ENCODE measurements at regions of chr1 and their contacts with region 1.

Region 1: GRCh38 chr1:151098126-151098525 is 27.6 kb downstream of the GABPB2 start:
- DNase-seq: no peak
- H3K4me3 ChIP-seq: no peak overlapping the region
- H3K4me3 Mint-ChIP-seq: no peak overlapping the region
- H3K27ac ChIP-seq: no peak overlapping the region
- H3K27ac Mint-ChIP-seq: no peak overlapping the region
- H3K4me1 ChIP-seq: no peaks in the 10 kb centered on the region
- H3K4me1 Mint-ChIP-seq: no peaks in the 10 kb centered on the region
- H3K27me3 ChIP-seq: no peaks in the 10 kb centered on the region
- H3K27me3 Mint-ChIP-seq: no peaks in the 10 kb centered on the region

Region 2: GRCh38 chr1:151008190-151008860 is 89.8 kb before region 1 on chr1 and contains the start of gene PRUNE1:
- CTCF ChIA-PET with region 1: interaction called, 12 read pairs
- POLR2A ChIA-PET with region 1: no interaction called
- intact Hi-C with region 1: no loop called
- DNase-seq: peak; percentile 92 to 99 (median 96)
- H3K4me3 ChIP-seq: peak within 1 kb of the TSS; percentile 74 to 92
- H3K4me3 Mint-ChIP-seq: peak within 1 kb of the TSS; percentile 88 to 99 (median 95)
- H3K27ac ChIP-seq: peak within 1 kb of the TSS; percentile 88
- H3K27ac Mint-ChIP-seq: peak within 1 kb of the TSS; percentile 90 to 100 (median 99)
- H3K4me1 ChIP-seq: peaks cover 67% of the 10 kb centered on the region
- H3K4me1 Mint-ChIP-seq: peaks cover 47 to 93% (median 69%) of the 10 kb centered on the region in 4 donors
- H3K27me3 ChIP-seq: no peaks in the 10 kb centered on the region
- H3K27me3 Mint-ChIP-seq: no peaks in the 10 kb centered on the region
- total RNA-seq, gene PRUNE1: 35.0 to 38.9 TPM

Region 3: GRCh38 chr1:151047925-151048645 is 50.0 kb before region 1 on chr1:
- CTCF ChIA-PET with region 1: interaction called, 11 read pairs
- POLR2A ChIA-PET with region 1: interaction called, 3 read pairs
- intact Hi-C with region 1: no loop called
- DNase-seq: peak; percentile 59 to 72 (median 64)
- H3K4me3 ChIP-seq: peak overlapping the region; percentile 59 to 74
- H3K4me3 Mint-ChIP-seq: peak overlapping the region; percentile 86 to 95 (median 90)
- H3K27ac ChIP-seq: peak overlapping the region; percentile 74
- H3K27ac Mint-ChIP-seq: peak overlapping the region; percentile 88 to 98 (median 93)
- H3K4me1 ChIP-seq: peaks cover 38% of the 10 kb centered on the region
- H3K4me1 Mint-ChIP-seq: peaks cover 35 to 81% (median 61%) of the 10 kb centered on the region in 4 donors
- H3K27me3 ChIP-seq: no peaks in the 10 kb centered on the region
- H3K27me3 Mint-ChIP-seq: no peaks in the 10 kb centered on the region

Region 4: DNA sequence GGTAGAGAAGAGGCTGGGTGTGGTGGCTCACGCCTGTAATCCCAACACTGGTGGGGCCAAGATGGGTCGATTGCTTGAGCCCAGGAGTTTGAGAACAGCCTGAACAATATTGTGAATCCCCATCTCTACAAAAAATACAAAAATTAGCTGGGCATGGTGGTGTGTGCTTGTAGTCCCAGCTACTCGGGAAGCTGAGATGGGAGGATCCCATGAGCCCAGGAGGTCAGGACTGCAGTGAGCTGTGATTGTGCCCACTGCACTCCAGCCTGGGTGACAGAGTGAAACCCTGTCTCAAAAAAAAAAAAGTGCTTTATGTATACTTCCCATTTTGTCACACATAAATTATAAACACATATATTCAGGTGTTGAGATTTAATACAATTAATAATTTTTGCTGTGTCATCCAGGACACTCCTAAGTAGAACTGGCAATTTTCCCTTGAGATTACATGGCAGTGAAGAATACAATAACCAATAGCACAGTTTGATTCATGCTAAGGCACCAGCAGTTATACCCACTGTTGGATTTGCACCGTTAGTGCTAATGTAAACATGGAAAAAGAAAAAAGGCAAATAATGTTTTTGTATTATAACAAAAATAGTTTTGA is 12.1 kb before region 1 on chr1:
- CTCF ChIA-PET with region 1: interaction called, 15 read pairs
- POLR2A ChIA-PET with region 1: no interaction called
- intact Hi-C with region 1: no loop called
- DNase-seq: no peak
- H3K4me3 ChIP-seq: no peak overlapping the region
- H3K4me3 Mint-ChIP-seq: no peak overlapping the region
- H3K27ac ChIP-seq: no peak overlapping the region
- H3K27ac Mint-ChIP-seq: peak overlapping the region in 2 of 7 donors; percentile 16 to 65
- H3K4me1 ChIP-seq: no peaks in the 10 kb centered on the region
- H3K4me1 Mint-ChIP-seq: no peaks in the 10 kb centered on the region
- H3K27me3 ChIP-seq: no peaks in the 10 kb centered on the region
- H3K27me3 Mint-ChIP-seq: no peaks in the 10 kb centered on the region

Region 5: DNA sequence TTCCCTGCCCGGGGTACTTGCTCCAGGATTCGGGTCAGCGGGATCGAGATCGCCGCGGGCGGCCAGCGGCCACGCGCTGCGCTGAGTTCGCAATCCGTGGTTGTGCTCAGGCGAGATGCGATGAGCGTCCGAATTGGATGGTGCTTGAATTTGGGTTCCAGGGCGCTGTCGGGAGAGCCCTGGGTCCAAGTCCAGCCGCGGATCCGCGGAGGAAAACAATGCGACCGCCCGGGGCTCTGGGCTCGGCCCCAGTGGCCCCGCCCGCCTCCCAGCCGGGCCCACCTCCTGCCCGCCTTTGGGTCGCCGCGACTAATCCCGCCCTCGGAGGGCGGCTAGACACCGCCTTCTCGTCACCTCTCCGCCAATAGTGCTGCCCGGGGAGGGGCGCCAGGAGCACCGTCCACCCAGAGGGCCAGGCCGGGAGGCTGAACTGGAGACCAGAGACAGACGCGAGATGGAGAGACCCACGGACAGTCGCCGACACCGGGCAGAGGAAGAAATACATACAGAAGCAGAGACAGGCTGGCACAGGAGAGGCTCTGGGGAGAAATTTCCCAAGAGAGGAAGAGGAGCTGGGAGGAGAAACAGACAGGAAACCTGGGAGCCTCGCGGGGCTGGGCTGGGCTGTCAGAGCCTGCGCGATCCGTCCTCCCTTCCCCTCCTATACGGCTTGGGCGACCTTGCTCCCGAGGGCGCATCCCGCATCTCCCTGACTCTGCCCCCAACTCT is 48.5 kb after region 1 on chr1 and contains the start of gene SEMA6C:
- CTCF ChIA-PET with region 1: interaction called, 18 read pairs
- POLR2A ChIA-PET with region 1: interaction called, 7 read pairs
- intact Hi-C with region 1: no loop called
- DNase-seq: peak; percentile 80 to 88 (median 81)
- H3K4me3 ChIP-seq: peak within 1 kb of the TSS; percentile 83
- H3K4me3 Mint-ChIP-seq: peak within 1 kb of the TSS; percentile 92 to 98 (median 97)
- H3K27ac ChIP-seq: peak within 1 kb of the TSS; percentile 56
- H3K27ac Mint-ChIP-seq: peak within 1 kb of the TSS; percentile 37 to 96 (median 94)
- H3K4me1 ChIP-seq: peaks cover 24% of the 10 kb centered on the region
- H3K4me1 Mint-ChIP-seq: peaks cover 9 to 33% (median 17%) of the 10 kb centered on the region in 4 donors
- H3K27me3 ChIP-seq: no peaks in the 10 kb centered on the region
- H3K27me3 Mint-ChIP-seq: peaks cover 0 to 2% of the 10 kb centered on the region in 2 donors
- total RNA-seq, gene SEMA6C: 7.6 to 8.2 TPM

Region 6: DNA sequence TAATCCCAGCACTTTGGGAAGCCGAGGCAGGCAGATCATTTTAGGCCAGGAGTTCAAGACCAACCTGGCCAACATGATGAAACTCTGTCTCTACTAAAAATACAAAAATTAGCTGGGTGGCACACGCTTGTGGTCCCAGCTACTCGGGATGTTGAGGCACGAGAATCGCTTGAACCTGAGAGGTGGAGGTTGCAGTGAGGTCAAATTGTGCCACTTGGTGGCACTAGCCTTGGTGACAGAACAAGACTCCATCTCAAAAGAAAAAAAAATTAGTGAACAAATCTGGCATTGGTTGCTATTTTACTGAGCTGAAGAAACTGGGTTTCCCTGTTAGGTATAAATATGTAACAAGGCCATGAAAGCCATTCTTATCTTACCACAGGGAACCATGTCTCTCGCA is 129.5 kb after region 1 on chr1:
- CTCF ChIA-PET with region 1: interaction called, 11 read pairs
- POLR2A ChIA-PET with region 1: no interaction called
- intact Hi-C with region 1: no loop called
- DNase-seq: no peak
- H3K4me3 ChIP-seq: no peak overlapping the region
- H3K4me3 Mint-ChIP-seq: no peak overlapping the region
- H3K27ac ChIP-seq: no peak overlapping the region
- H3K27ac Mint-ChIP-seq: no peak overlapping the region
- H3K4me1 ChIP-seq: no peaks in the 10 kb centered on the region
- H3K4me1 Mint-ChIP-seq: no peaks in the 10 kb centered on the region
- H3K27me3 ChIP-seq: no peaks in the 10 kb centered on the region
- H3K27me3 Mint-ChIP-seq: no peaks in the 10 kb centered on the region

Measured in CD4-positive, alpha-beta memory T cell (primary cell).